CD8-positive, alpha-beta T cell (primary cell): ENCODE measurements at regions of chr1 and their contacts with region 1.

Region 1: DNA sequence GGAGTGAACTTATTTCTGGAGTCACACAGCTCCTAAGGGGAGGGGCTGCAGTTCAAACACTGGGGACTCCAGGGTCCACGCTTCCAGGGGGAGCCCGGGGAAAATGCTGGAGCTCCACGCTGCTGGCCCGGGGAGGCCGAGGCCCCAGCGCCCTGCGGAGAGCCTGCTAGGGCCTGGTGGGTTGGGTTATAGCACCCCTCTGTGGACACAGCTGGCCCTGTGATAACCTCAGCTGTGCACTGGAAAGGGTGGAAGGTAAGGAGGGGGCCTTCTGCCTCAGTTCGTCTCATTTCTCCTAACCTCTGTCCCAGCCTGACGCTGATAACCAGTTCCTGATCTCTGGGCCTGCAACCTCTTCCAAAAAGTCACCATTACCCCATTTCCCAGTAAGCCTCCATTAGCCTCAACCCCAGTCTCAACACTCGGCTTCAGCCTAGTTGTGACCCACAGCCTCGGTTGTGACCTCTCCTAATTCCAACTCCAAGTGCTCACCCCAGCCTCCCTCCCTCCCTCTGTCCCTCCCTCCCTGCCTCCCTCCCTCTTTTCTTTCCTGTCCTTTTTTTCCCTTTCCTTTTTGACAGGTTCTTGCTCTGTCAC is 7.1 kb downstream of the NBL1 start:
- DNase-seq: peak; percentile 25 to 71 (median 54)
- ATAC-seq: peak; percentile 58
- H3K4me3 ChIP-seq: no peak overlapping the region
- H3K4me3 Mint-ChIP-seq: no peak overlapping the region
- H3K27ac ChIP-seq: no peak overlapping the region
- H3K27ac Mint-ChIP-seq: no peak overlapping the region
- H3K4me1 ChIP-seq: peaks cover 17% of the 10 kb centered on the region
- H3K4me1 Mint-ChIP-seq: peaks cover 18% of the 10 kb centered on the region
- H3K27me3 ChIP-seq: no peaks in the 10 kb centered on the region
- H3K27me3 Mint-ChIP-seq: no peaks in the 10 kb centered on the region
- CTCF ChIP-seq: peak; percentile 44

Region 2: DNA sequence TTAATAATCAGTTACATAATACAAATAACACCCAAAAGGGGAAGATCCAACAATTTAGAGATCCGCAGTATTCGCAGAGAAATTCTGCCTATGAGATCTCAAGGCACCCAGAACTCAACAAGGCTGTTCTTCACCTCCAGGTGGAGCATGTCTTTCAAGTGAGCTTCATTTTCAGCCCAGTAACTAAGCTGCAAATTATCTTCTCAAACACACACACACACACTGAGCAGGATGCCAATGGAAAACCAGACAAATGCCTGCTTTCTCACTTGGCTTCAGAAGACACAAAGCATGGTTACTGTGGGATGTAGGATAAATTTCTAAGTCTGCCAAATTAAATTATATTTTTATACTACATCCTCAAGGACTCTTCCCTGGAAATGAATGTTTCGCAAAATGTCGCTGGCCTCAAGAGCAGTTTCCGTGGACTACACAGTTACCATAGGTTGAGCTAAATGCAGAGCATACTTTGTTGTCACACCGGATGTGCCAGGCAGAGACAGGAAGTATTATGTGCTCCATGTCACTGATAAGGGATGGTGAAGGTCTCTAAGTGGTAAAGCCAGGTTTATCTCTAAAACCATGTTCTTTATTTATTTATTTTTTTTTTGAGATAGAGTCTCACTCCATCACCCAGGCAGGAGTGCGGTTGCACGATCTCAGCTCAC is 471.5 kb before region 1 on chr1:
- CTCF ChIA-PET with region 1: interaction called, 3 read pairs
- POLR2A ChIA-PET with region 1: no interaction called
- intact Hi-C with region 1: loop called in 1 of 2 experiments (anchors 5 kb)
- DNase-seq: peak in 8 of 9 experiments; percentile 11 to 61 (median 39)
- ATAC-seq: peak; percentile 83
- H3K4me3 ChIP-seq: no peak overlapping the region
- H3K4me3 Mint-ChIP-seq: peak overlapping the region; percentile 24
- H3K27ac ChIP-seq: peak overlapping the region; percentile 19 to 63
- H3K27ac Mint-ChIP-seq: peak overlapping the region; percentile 41
- H3K4me1 ChIP-seq: peaks cover 15% of the 10 kb centered on the region
- H3K4me1 Mint-ChIP-seq: peaks cover 24% of the 10 kb centered on the region
- H3K27me3 ChIP-seq: no peaks in the 10 kb centered on the region
- H3K27me3 Mint-ChIP-seq: no peaks in the 10 kb centered on the region
- CTCF ChIP-seq: peak; percentile 36

Region 3: DNA sequence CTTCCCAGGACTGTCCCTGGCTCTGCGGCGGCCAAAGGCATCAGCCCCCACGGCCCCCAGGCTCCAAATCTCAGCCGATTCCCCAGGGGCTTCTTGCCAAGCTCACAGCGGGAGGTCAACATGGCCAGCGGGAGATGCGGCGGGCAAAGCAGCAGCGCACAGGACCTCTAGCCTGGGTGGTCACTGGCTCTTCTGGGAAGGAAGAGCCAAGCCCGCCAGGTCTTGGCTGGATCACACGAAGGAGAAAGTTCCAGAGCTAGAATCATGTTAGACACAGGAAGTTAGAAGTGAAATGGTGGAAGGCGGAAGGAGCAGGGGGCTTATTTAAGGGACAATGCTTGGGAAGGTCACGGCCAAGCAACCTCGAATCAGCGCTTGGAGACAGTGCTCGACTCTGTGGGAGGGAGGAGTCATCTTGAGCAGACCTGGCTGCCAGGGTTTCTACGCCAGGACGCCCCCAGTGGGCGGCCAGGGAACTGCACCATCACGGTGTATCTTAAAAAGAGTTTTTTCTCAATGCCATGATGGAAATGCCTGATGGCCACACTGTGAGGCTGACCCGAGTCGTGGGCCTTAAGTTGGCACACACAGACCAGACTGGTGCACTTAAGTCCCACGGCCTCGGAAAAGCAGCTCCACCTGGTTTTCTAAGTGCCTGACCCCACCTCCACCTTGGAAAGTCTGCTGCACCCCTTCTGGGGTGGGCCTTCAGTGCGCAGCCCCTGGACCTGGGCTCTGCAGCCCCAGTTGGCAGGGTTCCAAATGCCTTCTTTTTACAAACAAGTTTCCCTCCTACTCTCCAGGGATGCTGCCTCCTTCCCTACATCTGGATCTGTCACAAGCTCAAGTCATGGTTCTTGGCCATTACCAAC is 309.8 kb before region 1 on chr1:
- CTCF ChIA-PET with region 1: interaction called, 9 read pairs
- POLR2A ChIA-PET with region 1: no interaction called
- intact Hi-C with region 1: loop called (anchors 1 kb)
- DNase-seq: peak; percentile 55 to 79 (median 72)
- ATAC-seq: peak; percentile 94
- H3K4me3 ChIP-seq: no peak overlapping the region
- H3K4me3 Mint-ChIP-seq: no peak overlapping the region
- H3K27ac ChIP-seq: no peak overlapping the region
- H3K27ac Mint-ChIP-seq: no peak overlapping the region
- H3K4me1 ChIP-seq: no peaks in the 10 kb centered on the region
- H3K4me1 Mint-ChIP-seq: peaks cover 6% of the 10 kb centered on the region
- H3K27me3 ChIP-seq: no peaks in the 10 kb centered on the region
- H3K27me3 Mint-ChIP-seq: no peaks in the 10 kb centered on the region
- CTCF ChIP-seq: peak; percentile 88

Region 4: DNA sequence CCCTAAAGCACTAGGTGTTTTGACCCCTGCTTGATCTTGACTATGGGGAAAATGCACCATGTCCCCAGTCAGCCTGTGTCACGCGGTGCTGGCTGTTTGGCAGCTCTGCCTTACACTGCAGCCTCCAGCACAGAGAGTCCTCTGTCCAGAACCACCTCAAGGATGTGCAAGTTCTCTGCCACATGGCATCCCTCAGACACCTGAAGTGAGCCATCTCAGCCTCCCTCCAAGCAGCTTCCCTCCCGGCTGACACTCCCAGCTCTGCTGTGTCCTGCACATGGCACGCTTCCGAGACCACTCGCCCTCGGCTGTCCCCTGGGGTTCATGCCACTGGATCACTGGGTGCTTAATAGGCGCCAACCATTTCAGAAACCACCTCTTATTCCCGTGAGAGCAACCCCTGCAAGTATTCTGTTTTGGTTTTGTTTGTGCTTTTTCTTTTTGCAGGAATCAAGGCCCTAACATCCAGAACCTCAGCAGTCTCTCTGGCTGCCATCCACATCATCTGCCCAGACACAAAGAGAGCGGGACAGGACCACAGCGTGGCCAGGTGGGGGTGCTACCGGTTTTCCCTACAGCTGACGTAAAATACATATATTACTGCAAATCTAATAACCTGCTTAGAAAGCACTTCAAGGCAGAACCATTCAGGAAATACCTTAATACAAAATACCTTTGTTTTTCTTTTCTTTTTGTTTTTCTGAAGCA is 211.6 kb before region 1 on chr1:
- CTCF ChIA-PET with region 1: interaction called, 4 read pairs
- POLR2A ChIA-PET with region 1: no interaction called
- intact Hi-C with region 1: loop called (anchors 1 to 2 kb)
- DNase-seq: peak; percentile 14 to 69 (median 58)
- ATAC-seq: peak; percentile 82
- H3K4me3 ChIP-seq: no peak overlapping the region
- H3K4me3 Mint-ChIP-seq: peak overlapping the region; percentile 22
- H3K27ac ChIP-seq: peak overlapping the region in 1 of 2 experiments; percentile 37
- H3K27ac Mint-ChIP-seq: peak overlapping the region; percentile 85
- H3K4me1 ChIP-seq: peaks cover 80% of the 10 kb centered on the region
- H3K4me1 Mint-ChIP-seq: peaks cover 90% of the 10 kb centered on the region
- H3K27me3 ChIP-seq: no peaks in the 10 kb centered on the region
- H3K27me3 Mint-ChIP-seq: no peaks in the 10 kb centered on the region
- CTCF ChIP-seq: peak; percentile 47

Region 5: DNA sequence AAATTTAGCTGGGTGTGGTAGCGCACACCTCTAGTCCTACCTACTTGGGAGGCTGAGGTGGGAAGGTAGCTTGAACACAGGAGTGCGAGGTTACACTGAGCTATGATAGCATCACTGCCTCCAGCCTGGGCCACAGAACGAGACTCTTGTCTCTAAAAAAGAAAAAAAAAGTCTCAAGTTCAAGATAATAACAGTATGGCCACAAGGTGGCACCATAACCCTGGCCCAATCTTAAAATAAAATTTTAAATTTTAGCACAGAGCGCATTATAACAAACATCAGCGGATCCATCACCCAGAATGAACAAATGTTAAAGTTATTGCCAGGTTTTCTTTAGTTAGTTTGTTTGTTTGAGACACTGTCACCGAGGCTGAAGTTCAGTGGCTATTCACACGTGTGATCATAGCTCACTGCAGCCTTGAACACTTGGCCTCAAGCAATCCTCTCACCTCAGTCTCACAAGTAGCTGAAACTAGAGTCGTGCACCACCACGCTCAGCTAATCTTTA is 10.5 kb after region 1 on chr1:
- CTCF ChIA-PET with region 1: interaction called, 18 read pairs
- POLR2A ChIA-PET with region 1: no interaction called
- intact Hi-C with region 1: no loop called
- DNase-seq: peak in 7 of 9 experiments; percentile 24 to 74 (median 53)
- ATAC-seq: peak; percentile 19
- H3K4me3 ChIP-seq: no peak overlapping the region
- H3K4me3 Mint-ChIP-seq: no peak overlapping the region
- H3K27ac ChIP-seq: no peak overlapping the region
- H3K27ac Mint-ChIP-seq: no peak overlapping the region
- H3K4me1 ChIP-seq: peaks cover 19% of the 10 kb centered on the region
- H3K4me1 Mint-ChIP-seq: peaks cover 30% of the 10 kb centered on the region
- H3K27me3 ChIP-seq: peaks cover 8 to 11% of the 10 kb centered on the region in 2 experiments
- H3K27me3 Mint-ChIP-seq: peaks cover 22% of the 10 kb centered on the region
- CTCF ChIP-seq: peak; percentile 82

Region 6: GRCh38 chr1:19704247-19705113 is 53.2 kb after region 1 on chr1:
- CTCF ChIA-PET with region 1: interaction called, 364 read pairs
- POLR2A ChIA-PET with region 1: no interaction called
- intact Hi-C with region 1: no loop called
- DNase-seq: peak; percentile 33 to 72 (median 63)
- ATAC-seq: peak; percentile 94
- H3K4me3 ChIP-seq: no peak overlapping the region
- H3K4me3 Mint-ChIP-seq: no peak overlapping the region
- H3K27ac ChIP-seq: no peak overlapping the region
- H3K27ac Mint-ChIP-seq: no peak overlapping the region
- H3K4me1 ChIP-seq: peaks cover 4% of the 10 kb centered on the region
- H3K4me1 Mint-ChIP-seq: peaks cover 9% of the 10 kb centered on the region
- H3K27me3 ChIP-seq: no peaks in the 10 kb centered on the region
- H3K27me3 Mint-ChIP-seq: no peaks in the 10 kb centered on the region
- CTCF ChIP-seq: peak; percentile 86

Region 7: DNA sequence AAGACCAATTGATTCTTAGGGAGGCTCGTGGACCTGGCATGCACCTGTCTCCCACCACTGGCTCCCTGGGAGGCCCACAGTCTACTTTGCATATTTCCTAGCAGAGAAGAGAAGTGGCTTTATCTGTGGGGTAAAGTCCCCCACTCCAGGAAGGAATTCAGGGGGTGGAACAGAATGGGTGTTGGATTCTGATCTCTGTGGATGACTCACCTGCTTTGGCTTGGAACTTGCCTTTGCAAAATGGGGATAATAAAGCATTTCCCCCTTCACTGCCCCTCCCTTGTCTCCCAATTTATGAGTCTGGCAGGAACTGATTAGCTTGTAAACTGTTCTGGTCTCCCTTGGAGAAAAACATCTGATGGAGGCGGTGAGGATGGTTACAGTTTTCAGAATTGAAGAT is 209.8 kb after region 1 on chr1:
- CTCF ChIA-PET with region 1: no interaction called
- POLR2A ChIA-PET with region 1: no interaction called
- intact Hi-C with region 1: no loop called
- DNase-seq: no peak
- ATAC-seq: no peak
- H3K4me3 ChIP-seq: no peak overlapping the region
- H3K4me3 Mint-ChIP-seq: no peak overlapping the region
- H3K27ac ChIP-seq: no peak overlapping the region
- H3K27ac Mint-ChIP-seq: no peak overlapping the region
- H3K4me1 ChIP-seq: no peaks in the 10 kb centered on the region
- H3K4me1 Mint-ChIP-seq: no peaks in the 10 kb centered on the region
- H3K27me3 ChIP-seq: peaks cover 0 to 3% of the 10 kb centered on the region in 2 experiments
- H3K27me3 Mint-ChIP-seq: peaks cover 29% of the 10 kb centered on the region
- CTCF ChIP-seq: no peak